ENCODE measurements at regions of chr17 and their contacts with region 1.

Region 1: GRCh38 chr17:4366327-4367063 is at the start of gene UBE2G1:
- DNase-seq: peak; percentile 97
- H3K4me3 Mint-ChIP-seq: peak within 1 kb of the TSS; percentile 72
- H3K27ac Mint-ChIP-seq: peak within 1 kb of the TSS; percentile 86
- H3K4me1 Mint-ChIP-seq: peaks cover 30% of the 10 kb centered on the region
- H3K27me3 Mint-ChIP-seq: no peaks in the 10 kb centered on the region
- total RNA-seq, gene UBE2G1: 80.3 and 87.3 TPM in 2 replicates

Region 2: GRCh38 chr17:4215882-4216570 is 150.5 kb before region 1 on chr17:
- intact Hi-C with region 1: loop called (anchors 1 kb)
- DNase-seq: no peak
- H3K4me3 Mint-ChIP-seq: no peak overlapping the region
- H3K27ac Mint-ChIP-seq: peak overlapping the region; percentile 15
- H3K4me1 Mint-ChIP-seq: peaks cover 21% of the 10 kb centered on the region
- H3K27me3 Mint-ChIP-seq: no peaks in the 10 kb centered on the region

Region 3: DNA sequence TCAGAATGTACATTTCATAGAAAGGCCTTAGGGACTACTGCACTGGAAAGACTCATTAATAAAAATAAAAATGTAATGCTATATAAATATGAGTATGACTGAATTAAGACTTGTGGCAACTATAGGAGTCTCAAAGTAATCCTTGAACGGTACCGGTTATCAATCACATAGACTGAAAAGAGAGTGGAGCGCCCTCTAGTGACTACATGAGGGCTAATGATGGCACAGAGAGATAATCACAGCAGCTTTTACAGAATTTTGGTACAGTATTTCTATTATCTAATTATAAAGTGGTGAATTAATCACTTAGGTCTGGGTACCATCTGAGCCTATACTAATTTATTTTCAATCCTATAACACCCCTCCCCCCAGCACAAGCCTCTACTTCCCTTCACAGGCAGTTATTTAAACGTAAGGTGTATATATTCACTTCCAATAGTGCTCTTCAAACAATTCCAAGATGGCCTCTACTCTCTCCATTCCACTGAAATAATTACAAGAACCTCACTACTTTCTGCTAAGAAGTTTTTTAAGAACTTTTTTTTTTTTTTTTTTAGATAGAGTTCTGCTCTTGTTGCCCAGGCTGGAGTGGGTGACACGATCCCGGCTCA is 62.0 kb before region 1 on chr17:
- intact Hi-C with region 1: loop called (anchors 2 kb)
- DNase-seq: peak; percentile 12
- H3K4me3 Mint-ChIP-seq: no peak overlapping the region
- H3K27ac Mint-ChIP-seq: no peak overlapping the region
- H3K4me1 Mint-ChIP-seq: peaks cover 26% of the 10 kb centered on the region
- H3K27me3 Mint-ChIP-seq: no peaks in the 10 kb centered on the region

Region 4: DNA sequence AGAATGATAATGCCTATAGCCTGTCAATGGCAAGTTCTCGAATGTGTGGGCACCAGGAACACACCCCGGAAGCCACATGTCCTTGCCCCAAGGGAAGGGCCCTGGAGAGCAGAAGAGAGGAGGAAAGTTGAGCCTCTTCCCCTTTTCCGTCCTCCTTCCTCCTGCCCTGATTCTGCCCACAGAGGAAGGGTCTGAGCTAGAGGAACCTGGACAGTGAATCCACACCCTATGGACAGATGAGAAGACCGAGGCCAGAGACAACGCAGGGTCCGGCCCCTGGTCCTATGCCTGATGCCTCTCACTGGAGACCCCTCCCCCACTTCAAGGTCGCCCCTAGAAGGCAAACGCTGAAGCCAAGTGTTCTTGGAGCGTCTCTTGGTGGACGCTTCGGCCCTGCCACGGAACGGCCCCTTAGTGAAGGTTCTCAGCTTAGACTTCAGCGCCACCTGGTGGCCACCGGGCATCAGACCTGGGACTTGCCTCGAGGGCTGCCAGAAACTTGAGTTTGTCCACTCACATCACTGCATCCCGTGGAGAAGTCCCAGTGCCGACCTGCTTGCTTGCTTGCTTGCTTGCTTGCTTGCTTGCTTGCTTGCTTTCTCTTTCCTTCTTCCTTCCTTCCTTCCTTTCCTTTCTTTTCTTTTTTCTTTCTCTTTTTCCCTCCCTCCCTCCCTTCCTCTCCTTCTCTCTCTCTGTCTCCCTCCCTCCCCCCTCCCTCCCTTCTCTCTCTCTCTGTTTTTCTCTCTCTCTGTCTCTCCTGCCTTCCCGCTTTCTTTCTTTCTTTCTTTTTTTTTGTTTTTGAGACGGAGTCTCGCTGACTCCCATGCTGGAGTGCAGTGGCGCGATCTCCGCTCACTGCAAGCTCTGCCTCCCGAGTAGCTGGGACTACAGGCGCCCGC is 46.7 kb after region 1 on chr17:
- intact Hi-C with region 1: loop called (anchors 1 kb)
- DNase-seq: peak; percentile 82
- H3K4me3 Mint-ChIP-seq: peak overlapping the region; percentile 50
- H3K27ac Mint-ChIP-seq: peak overlapping the region; percentile 59
- H3K4me1 Mint-ChIP-seq: peaks cover 5% of the 10 kb centered on the region
- H3K27me3 Mint-ChIP-seq: peaks cover 2% of the 10 kb centered on the region

Region 5: DNA sequence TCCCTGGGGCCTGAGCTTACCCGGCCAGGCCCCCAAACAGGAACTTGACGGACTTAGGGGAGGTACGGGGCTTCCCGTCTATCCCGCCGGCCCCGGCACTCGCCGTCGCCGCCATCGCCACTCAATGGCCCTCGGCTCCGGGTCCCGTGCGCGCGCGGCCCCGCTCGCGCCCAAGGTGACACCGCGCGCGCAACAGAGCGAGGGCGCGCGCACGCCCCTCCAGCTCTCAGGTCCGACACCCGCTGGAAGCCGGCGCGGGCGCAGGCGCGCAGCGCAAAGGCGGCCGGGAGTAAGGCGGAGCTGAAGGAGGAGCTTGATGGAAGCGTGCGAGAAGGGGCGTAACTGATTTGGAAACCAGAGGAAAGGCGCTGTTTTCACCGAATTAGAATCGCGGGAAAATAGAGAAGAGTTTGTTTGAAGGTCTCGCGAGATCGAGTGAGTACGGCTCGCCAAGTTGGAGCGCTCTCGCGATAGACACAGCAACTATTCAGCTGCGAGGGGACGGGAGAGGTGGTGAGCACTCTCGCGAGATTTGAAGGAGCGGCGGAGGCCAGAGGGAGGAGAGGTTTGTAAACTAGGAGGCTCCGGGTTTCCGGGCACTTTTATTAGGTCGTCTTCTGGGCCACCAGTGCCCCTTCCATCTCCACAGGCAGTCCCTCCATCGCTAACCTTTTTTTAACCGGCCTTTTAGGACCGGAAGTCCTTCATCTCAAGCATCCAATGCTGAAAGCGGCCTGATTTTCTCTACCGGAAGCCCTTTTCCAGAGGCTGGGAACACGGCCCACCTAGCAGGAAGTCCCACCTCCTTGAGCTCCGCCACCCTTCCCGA is 573.5 kb after region 1 on chr17 and contains the starts of genes RNF167 and SLC25A11:
- intact Hi-C with region 1: loop called (anchors 5 kb)
- DNase-seq: peak; percentile 98
- H3K4me3 Mint-ChIP-seq: peak within 1 kb of the TSS; percentile 100
- H3K27ac Mint-ChIP-seq: peak within 1 kb of the TSS; percentile 94
- H3K4me1 Mint-ChIP-seq: peaks cover 56% of the 10 kb centered on the region
- H3K27me3 Mint-ChIP-seq: no peaks in the 10 kb centered on the region
- total RNA-seq, gene RNF167: 138 and 140 TPM in 2 replicates
- total RNA-seq, gene SLC25A11: 111 and 116 TPM in 2 replicates

Measured in activated T-helper 1 cell treated with anti-CD3 and anti-CD28 coated beads, Interleukin-12 subunit alpha, Interleukin-12 subunit beta, Interleukin-2, Interleukin-4 antibody, amounts not matched to agents 30 ng/mL and 10 ng/mL and 1 ng/mL, durations not matched to agents 14 hours and 24 hours and 36 hours (primary cell).